IMR-90 (cell line): ENCODE measurements at regions of chr2 and their contacts with region 1.

Region 1: DNA sequence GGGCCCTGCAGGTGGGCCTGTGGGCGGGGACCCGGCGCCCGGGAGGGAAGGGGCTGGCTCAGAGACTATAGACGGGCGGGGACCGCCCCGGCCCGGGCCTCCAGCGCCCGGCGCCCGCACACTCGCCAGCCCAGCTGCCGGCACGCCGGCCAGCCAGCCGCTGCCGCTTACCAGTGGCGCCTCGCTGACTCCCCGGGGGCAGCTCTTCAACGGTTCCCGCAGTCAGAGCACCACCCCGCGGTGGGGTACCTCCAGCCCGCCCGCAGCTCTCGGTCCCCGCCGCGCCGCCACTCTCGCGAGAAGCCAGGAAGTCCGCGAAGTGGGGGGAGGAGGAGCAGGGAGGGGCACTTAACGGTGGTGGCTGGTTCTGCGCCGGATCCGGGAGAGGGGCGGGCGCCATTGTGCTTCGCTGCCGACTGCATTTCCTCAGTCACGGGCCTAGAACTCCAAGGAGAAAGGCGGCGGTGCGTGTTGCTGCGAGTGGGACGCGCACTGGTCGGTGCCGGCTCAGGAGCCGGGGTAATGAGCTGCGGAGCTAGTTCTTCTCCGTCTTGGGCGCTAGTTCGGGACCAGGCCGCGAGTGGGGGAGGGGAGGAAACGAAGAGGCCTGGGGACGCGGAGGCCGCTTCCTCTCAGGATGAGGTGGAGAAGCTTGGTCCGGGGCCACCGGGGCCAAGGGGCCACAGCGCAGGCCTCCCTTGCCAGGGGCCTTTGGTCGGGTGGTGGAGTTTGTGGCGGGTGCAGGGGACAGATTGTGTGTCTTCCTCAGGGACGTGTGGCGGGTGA is at the start of gene MARCHF7:
- DNase-seq: peak; percentile 95
- ATAC-seq: peak; percentile 94
- H3K4me3 ChIP-seq: peak within 1 kb of the TSS; percentile 95
- H3K27ac ChIP-seq: peak within 1 kb of the TSS; percentile 97
- H3K4me1 ChIP-seq: peaks cover 8% of the 10 kb centered on the region
- H3K27me3 ChIP-seq: no peaks in the 10 kb centered on the region
- CTCF ChIP-seq: peak; percentile 87
- POLR2A ChIP-seq: peak; percentile 97
- RAD21 ChIP-seq: peak; percentile 81
- total RNA-seq, gene MARCHF7: 193 and 212 TPM in 2 replicates

Region 2: DNA sequence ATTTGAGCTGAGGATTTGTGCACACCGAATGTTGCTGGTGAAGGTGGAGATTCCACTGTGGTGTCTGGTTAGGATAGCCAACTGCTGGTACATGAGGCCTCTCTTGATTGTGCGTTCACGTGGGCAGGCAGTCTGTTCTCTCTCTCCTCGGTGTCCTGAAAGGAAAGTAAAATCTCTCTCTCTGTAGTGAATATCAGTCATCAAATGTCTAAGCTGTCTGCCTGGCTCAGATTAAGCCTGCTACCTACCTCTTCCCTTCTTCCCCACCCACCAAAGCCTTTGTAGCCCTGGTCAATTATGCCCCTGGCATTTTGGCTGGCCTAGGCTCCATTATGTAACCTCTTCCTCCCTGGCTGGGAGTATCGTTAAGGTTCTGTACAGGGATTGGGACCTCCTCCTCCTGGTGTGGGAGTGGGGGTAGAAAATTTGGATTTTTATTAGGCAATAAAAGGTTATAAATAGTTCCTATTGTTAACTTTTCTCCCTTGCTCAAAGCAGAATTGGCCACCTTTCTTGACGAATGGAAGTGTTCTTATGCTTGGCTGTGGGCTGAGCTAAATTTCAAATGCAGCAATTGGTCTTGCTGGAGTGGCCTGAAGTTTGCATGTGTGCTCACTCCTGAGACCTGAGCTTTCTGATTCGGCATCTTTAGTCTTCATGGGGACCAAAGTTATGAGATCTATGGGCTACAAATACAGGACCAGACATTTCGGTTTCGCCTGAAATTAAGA is 574.7 kb before region 1 on chr2:
- CTCF ChIA-PET with region 1: no interaction called
- POLR2A ChIA-PET with region 1: no interaction called
- dilution Hi-C with region 1: no loop called
- in situ Hi-C with region 1: no loop called
- intact Hi-C with region 1: loop called (anchors 5 kb)
- DNase-seq: no peak
- ATAC-seq: no peak
- H3K4me3 ChIP-seq: no peak overlapping the region
- H3K27ac ChIP-seq: peak overlapping the region; percentile 95
- H3K4me1 ChIP-seq: peaks cover 31% of the 10 kb centered on the region
- H3K27me3 ChIP-seq: no peaks in the 10 kb centered on the region
- CTCF ChIP-seq: no peak
- POLR2A ChIP-seq: no peak
- RAD21 ChIP-seq: no peak

Region 3: GRCh38 chr2:159201360-159202063 is 510.8 kb before region 1 on chr2:
- CTCF ChIA-PET with region 1: no interaction called
- POLR2A ChIA-PET with region 1: no interaction called
- dilution Hi-C with region 1: no loop called
- in situ Hi-C with region 1: no loop called
- intact Hi-C with region 1: loop called (anchors 10 kb)
- DNase-seq: peak; percentile 78
- ATAC-seq: peak; percentile 5; the same call in 1 of the 2 replicates
- H3K4me3 ChIP-seq: no peak overlapping the region
- H3K27ac ChIP-seq: no peak overlapping the region
- H3K4me1 ChIP-seq: peaks cover 13% of the 10 kb centered on the region
- H3K27me3 ChIP-seq: no peaks in the 10 kb centered on the region
- CTCF ChIP-seq: no peak
- POLR2A ChIP-seq: no peak; the same call in 1 of the 2 replicates
- RAD21 ChIP-seq: no peak

Region 4: GRCh38 chr2:159230145-159230877 is 482.0 kb before region 1 on chr2:
- CTCF ChIA-PET with region 1: no interaction called
- POLR2A ChIA-PET with region 1: no interaction called
- dilution Hi-C with region 1: no loop called
- in situ Hi-C with region 1: no loop called
- intact Hi-C with region 1: loop called (anchors 10 kb)
- DNase-seq: no peak
- ATAC-seq: no peak
- H3K4me3 ChIP-seq: no peak overlapping the region
- H3K27ac ChIP-seq: no peak overlapping the region
- H3K4me1 ChIP-seq: no peaks in the 10 kb centered on the region; the same call in 1 of the 2 replicates
- H3K27me3 ChIP-seq: no peaks in the 10 kb centered on the region
- CTCF ChIP-seq: no peak
- POLR2A ChIP-seq: no peak
- RAD21 ChIP-seq: no peak

Region 5: GRCh38 chr2:159286709-159287441 is 425.5 kb before region 1 on chr2:
- CTCF ChIA-PET with region 1: interaction called, 3 read pairs
- POLR2A ChIA-PET with region 1: interaction called, 3 read pairs
- dilution Hi-C with region 1: no loop called
- in situ Hi-C with region 1: no loop called
- intact Hi-C with region 1: loop called (anchors 5 kb)
- DNase-seq: peak; percentile 89
- ATAC-seq: peak; percentile 99
- H3K4me3 ChIP-seq: peak overlapping the region; percentile 59
- H3K27ac ChIP-seq: peak overlapping the region; percentile 92
- H3K4me1 ChIP-seq: peaks cover 5% of the 10 kb centered on the region
- H3K27me3 ChIP-seq: no peaks in the 10 kb centered on the region
- CTCF ChIP-seq: no peak
- POLR2A ChIP-seq: no peak
- RAD21 ChIP-seq: no peak

Region 6: DNA sequence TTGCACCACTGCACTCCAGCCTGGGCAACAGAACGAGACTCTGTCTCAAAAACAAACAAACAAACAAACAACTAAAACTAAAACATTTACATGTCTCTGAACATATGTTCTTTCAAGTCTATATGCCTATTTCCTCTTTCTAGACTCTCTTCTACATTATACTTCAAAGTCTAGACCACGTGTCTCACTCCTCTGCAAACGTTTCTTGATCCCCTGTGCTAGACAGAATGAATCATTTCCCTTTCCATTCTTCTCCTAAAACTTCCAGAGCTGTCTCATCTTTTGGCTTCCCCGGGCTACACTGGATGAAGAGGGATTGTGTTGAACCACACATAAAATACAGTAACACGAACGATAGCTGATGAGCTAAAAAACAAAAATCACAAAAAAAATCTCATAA is 163.1 kb before region 1 on chr2:
- CTCF ChIA-PET with region 1: no interaction called
- POLR2A ChIA-PET with region 1: no interaction called
- dilution Hi-C with region 1: no loop called
- in situ Hi-C with region 1: no loop called
- intact Hi-C with region 1: loop called (anchors 5 kb)
- DNase-seq: peak; percentile 12
- ATAC-seq: no peak
- H3K4me3 ChIP-seq: no peak overlapping the region
- H3K27ac ChIP-seq: no peak overlapping the region
- H3K4me1 ChIP-seq: peaks cover 2% of the 10 kb centered on the region; the same call in 1 of the 2 replicates
- H3K27me3 ChIP-seq: no peaks in the 10 kb centered on the region
- CTCF ChIP-seq: no peak
- POLR2A ChIP-seq: no peak
- RAD21 ChIP-seq: no peak

Region 7: GRCh38 chr2:159615140-159615951 is 97.0 kb before region 1 on chr2:
- CTCF ChIA-PET with region 1: no interaction called
- POLR2A ChIA-PET with region 1: interaction called, 8 read pairs
- dilution Hi-C with region 1: no loop called
- in situ Hi-C with region 1: no loop called
- intact Hi-C with region 1: loop called (anchors 1 kb)
- DNase-seq: peak; percentile 91
- ATAC-seq: peak; percentile 90
- H3K4me3 ChIP-seq: peak overlapping the region; percentile 88
- H3K27ac ChIP-seq: peak overlapping the region; percentile 98
- H3K4me1 ChIP-seq: no peaks in the 10 kb centered on the region; the same call in 1 of the 2 replicates
- H3K27me3 ChIP-seq: no peaks in the 10 kb centered on the region
- CTCF ChIP-seq: no peak
- POLR2A ChIP-seq: peak; percentile 64; the same call in 1 of the 2 replicates
- RAD21 ChIP-seq: no peak

Region 8: DNA sequence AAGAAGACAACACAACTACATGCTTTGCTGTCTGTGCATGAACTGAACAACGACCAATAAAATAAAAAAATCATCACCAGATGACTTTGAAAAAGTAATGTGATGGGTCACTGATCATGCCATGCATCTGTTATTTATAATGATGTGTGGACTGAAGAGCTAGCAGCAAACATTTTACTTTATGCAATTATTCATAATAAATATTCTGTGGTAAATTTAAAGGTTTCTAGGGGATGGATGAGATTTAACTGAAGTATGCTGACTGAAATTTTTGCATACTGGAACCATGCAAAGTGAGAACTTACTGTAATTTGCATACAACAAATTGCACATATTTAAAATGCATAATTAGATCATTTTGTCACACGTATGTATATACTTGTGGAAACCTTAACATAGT is 64.7 kb before region 1 on chr2:
- CTCF ChIA-PET with region 1: no interaction called
- POLR2A ChIA-PET with region 1: no interaction called
- dilution Hi-C with region 1: no loop called
- in situ Hi-C with region 1: no loop called
- intact Hi-C with region 1: no loop called
- DNase-seq: no peak
- ATAC-seq: no peak
- H3K4me3 ChIP-seq: no peak overlapping the region
- H3K27ac ChIP-seq: no peak overlapping the region
- H3K4me1 ChIP-seq: no peaks in the 10 kb centered on the region
- H3K27me3 ChIP-seq: no peaks in the 10 kb centered on the region
- CTCF ChIP-seq: no peak
- POLR2A ChIP-seq: no peak
- RAD21 ChIP-seq: no peak

Region 9: GRCh38 chr2:159797543-159798375 is 85.4 kb after region 1 on chr2 and contains the start of gene CD302:
- CTCF ChIA-PET with region 1: no interaction called
- POLR2A ChIA-PET with region 1: no interaction called
- dilution Hi-C with region 1: no loop called
- in situ Hi-C with region 1: no loop called
- intact Hi-C with region 1: no loop called
- DNase-seq: peak; percentile 45
- ATAC-seq: peak; percentile 92
- H3K4me3 ChIP-seq: peak within 1 kb of the TSS; percentile 90
- H3K27ac ChIP-seq: peak within 1 kb of the TSS; percentile 49
- H3K4me1 ChIP-seq: peaks cover 4% of the 10 kb centered on the region
- H3K27me3 ChIP-seq: 0 out of 2 replicates have a peak, but pooled peaks cover 2% of the 10 kb centered on the region
- CTCF ChIP-seq: no peak
- POLR2A ChIP-seq: no peak
- RAD21 ChIP-seq: no peak
- total RNA-seq, gene CD302: 3.8 and 6.1 TPM in 2 replicates